BJ (cell line): ENCODE measurements at regions of chr10 and their contacts with region 1.

Region 1: GRCh38 chr10:73529089-73529832 is 33.4 kb upstream of the PPP3CB start:
- DNase-seq: peak; percentile 14
- H3K4me3 ChIP-seq: no peak overlapping the region
- H3K27me3 ChIP-seq: no peaks in the 10 kb centered on the region
- CTCF ChIP-seq: peak; percentile 72

Region 2: GRCh38 chr10:73517271-73517877 is 11.9 kb before region 1 on chr10:
- CTCF ChIA-PET with region 1: interaction called, 11 read pairs
- POLR2A ChIA-PET with region 1: no interaction called
- DNase-seq: no peak
- H3K4me3 ChIP-seq: no peak overlapping the region
- H3K27me3 ChIP-seq: no peaks in the 10 kb centered on the region
- CTCF ChIP-seq: no peak

Region 3: DNA sequence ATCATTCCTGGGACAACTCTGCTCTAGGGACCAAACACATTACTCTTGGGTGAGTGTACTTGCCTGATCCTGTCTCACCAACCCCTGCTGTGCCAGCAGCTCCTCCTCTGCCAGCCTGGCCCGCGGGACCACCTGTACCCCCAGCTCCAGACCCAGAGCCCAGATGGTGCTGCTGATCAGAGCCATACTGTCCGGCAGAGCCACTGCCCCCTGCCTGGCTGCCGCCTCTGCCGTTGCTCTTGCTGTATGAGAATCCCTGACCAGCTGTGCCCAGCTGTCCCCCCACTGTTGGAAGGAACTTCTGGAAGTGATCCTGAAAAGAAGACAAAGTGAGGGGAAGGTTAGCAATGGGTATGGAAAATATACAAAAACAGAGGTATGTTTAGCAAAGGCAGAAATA is 105.2 kb after region 1 on chr10:
- CTCF ChIA-PET with region 1: interaction called, 13 read pairs
- POLR2A ChIA-PET with region 1: no interaction called
- DNase-seq: no peak
- H3K4me3 ChIP-seq: no peak overlapping the region
- H3K27me3 ChIP-seq: no peaks in the 10 kb centered on the region
- CTCF ChIP-seq: no peak

Region 4: DNA sequence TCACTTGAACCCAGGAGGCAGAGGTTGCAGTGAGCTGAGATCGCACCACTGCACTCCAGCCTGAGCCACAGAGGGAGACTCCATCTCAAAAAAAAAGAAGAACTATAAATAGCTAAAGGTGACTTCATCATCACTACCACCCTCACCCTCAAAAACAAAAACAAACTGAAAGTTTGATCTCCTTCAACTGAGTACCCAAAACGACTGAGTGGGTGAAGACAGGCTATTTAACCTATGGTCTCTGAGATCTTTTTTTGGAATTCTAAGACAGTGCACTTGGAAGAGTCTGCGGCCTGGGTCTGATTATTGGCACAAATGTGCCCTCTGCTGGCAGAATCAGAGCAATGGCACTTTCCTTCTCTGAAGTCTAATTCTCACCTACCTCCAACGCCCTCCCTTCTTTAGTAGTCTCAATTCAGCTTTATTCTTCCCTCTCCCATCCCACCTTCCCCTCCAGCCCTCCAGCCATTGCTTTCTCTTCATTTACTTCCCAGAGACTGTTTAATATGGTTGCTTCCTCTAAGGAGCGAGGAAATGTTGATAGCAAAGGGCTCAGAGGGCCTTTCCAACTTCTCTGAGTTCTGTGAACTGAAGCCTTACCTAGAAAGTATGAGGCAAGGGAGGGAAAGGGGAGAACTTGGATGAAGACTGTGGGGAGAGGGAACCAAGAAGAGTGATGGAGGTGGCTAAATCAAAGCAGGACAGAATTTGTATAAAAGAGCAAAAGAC is 114.9 kb after region 1 on chr10:
- CTCF ChIA-PET with region 1: interaction called, 181 read pairs
- POLR2A ChIA-PET with region 1: no interaction called
- DNase-seq: peak; percentile 15
- H3K4me3 ChIP-seq: no peak overlapping the region
- H3K27me3 ChIP-seq: no peaks in the 10 kb centered on the region; the same call in 1 of the 2 replicates
- CTCF ChIP-seq: peak; percentile 78